ENCODE measurements at regions of chr22 and their contacts with region 1.

Region 1: GRCh38 chr22:38201710-38202436 is at the start of gene MAFF:
- DNase-seq: peak; percentile 88 to 99
- H3K4me3 ChIP-seq: peak within 1 kb of the TSS; percentile 87 to 89
- H3K27ac ChIP-seq: peak within 1 kb of the TSS; percentile 99 to 100
- H3K4me1 ChIP-seq: peaks cover 19 to 26% of the 10 kb centered on the region in 2 donors
- H3K27me3 ChIP-seq: no peaks in the 10 kb centered on the region
- CTCF ChIP-seq: no peak
- total RNA-seq, gene MAFF: 183 TPM

Region 2: DNA sequence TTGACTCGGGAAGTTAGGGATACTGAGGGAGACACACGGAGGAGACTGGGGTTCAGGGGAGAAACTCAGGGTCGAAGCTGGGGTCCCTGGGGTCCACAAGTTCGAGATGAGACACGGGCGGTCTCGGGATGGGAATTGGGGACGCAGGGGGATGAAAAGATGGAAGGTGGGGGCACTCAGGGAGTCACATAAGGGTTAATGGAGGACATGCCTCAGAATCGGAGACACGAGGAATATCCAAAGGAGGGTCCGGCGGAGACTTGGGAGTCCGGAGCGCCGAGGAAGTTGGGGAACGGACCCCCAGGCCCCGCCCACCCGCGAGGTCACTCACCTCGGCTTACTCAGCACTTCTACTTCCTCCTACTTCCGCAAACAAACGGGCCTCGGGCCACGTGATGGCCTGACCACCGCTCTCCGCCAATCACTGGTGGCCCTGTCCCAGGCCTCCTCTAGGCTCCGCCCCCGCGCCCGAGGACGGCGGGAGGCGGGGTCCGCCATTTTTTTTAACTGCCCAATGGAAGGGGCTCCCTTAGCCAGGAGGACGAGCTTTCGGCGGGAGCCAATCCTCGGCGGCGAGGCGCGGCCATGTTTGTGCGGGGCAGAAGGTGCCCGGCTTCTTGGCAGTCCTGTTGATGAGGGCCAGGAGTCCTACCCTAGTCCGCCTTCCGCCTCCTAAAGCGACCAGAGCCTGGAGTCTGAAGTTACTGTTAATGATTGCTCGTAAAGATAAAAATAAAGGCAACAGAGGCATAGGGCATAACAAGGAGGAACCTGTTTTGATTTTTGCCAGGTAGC is 20.2 kb before region 1 on chr22 and contains the start of gene PLA2G6:
- intact Hi-C with region 1: loop called (anchors 1 kb)
- DNase-seq: peak; percentile 97 to 99
- H3K4me3 ChIP-seq: peak within 1 kb of the TSS; percentile 56 to 67
- H3K27ac ChIP-seq: peak within 1 kb of the TSS; percentile 81 to 82
- H3K4me1 ChIP-seq: peaks cover 7 to 18% of the 10 kb centered on the region in 2 donors
- H3K27me3 ChIP-seq: no peaks in the 10 kb centered on the region
- CTCF ChIP-seq: no peak
- total RNA-seq, gene PLA2G6: 79.5 TPM

Region 3: GRCh38 chr22:38239101-38239761 is 37.4 kb after region 1 on chr22:
- intact Hi-C with region 1: loop called (anchors 2 kb)
- DNase-seq: peak in 1 of 2 donors; percentile 85
- H3K4me3 ChIP-seq: peak overlapping the region in 1 of 2 donors; percentile 29
- H3K27ac ChIP-seq: peak overlapping the region; percentile 75 to 81
- H3K4me1 ChIP-seq: peaks cover 9 to 36% of the 10 kb centered on the region in 2 donors
- H3K27me3 ChIP-seq: no peaks in the 10 kb centered on the region
- CTCF ChIP-seq: peak in 2 of 3 experiments; percentile 37 to 50

Region 4: DNA sequence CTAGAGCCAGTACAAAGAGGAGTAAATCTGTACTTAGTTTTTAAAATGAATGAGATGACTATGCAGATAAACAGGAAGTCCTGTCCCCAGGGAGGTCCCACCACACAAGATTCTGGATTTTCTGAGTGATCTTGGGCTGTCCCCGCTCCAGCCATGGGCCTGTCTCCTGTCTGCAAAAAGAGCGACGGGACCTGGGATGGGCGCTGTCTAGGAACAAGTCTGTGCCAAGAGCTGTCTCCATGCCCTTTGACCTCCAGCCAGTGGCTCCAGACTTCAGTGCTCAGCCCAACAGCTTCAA is 109.4 kb after region 1 on chr22:
- intact Hi-C with region 1: loop called (anchors 2 kb)
- DNase-seq: no peak
- H3K4me3 ChIP-seq: no peak overlapping the region
- H3K27ac ChIP-seq: peak overlapping the region; percentile 97 to 99
- H3K4me1 ChIP-seq: peaks cover 32 to 57% of the 10 kb centered on the region in 2 donors
- H3K27me3 ChIP-seq: no peaks in the 10 kb centered on the region
- CTCF ChIP-seq: no peak

Region 5: DNA sequence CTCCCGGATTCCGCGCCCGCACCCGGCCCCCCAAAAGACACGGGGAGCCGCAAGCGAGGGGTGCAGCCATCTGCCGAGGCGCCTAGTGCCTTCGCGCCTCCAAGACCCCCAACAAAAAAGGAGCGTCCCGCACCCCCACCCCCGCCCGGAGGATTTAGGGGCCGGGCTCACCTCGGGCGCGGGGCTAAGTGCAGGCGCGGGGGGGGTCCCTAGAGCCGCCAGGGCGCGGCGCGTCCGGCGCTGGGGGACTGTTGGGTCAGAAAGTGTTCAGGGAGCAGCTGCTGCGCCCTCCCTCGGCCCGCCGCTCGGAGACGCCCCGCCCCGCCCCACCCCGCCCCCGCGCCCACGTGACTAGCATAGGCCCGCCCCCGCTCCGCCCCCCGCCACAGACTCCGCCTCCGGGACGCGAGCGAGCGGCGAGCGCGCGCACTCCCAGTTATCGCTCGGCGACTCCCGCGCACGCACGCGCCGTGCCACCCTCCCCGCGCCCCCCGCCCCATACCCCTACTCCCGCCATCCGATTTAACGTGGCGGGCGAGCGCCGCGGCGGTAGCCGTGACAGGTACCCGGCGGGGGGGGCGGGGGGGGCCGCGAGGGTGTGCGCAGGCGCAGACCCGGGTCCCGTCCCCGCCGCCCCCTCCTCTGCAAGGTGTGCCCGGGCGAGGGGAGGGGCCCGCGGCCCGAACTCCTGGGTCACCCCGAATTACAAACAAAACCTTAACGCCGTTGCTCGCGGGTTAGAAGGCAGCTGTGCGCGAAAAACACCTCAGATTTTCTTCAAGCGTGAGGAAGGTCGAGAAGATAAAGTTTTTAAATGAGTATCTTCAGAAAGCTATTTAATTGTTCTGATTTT is 197.0 kb after region 1 on chr22:
- intact Hi-C with region 1: loop called (anchors 5 kb)
- DNase-seq: peak in 1 of 2 donors; percentile 85
- H3K4me3 ChIP-seq: peak overlapping the region; percentile 82 to 97
- H3K27ac ChIP-seq: peak overlapping the region; percentile 77 to 86
- H3K4me1 ChIP-seq: peaks cover 0 to 3% of the 10 kb centered on the region in 2 donors
- H3K27me3 ChIP-seq: no peaks in the 10 kb centered on the region
- CTCF ChIP-seq: no peak

Measured in ascending aorta (tissue), 2 donors.